HEK293 (cell line): ENCODE measurements at regions of chr17 and their contacts with region 1.

Region 1: DNA sequence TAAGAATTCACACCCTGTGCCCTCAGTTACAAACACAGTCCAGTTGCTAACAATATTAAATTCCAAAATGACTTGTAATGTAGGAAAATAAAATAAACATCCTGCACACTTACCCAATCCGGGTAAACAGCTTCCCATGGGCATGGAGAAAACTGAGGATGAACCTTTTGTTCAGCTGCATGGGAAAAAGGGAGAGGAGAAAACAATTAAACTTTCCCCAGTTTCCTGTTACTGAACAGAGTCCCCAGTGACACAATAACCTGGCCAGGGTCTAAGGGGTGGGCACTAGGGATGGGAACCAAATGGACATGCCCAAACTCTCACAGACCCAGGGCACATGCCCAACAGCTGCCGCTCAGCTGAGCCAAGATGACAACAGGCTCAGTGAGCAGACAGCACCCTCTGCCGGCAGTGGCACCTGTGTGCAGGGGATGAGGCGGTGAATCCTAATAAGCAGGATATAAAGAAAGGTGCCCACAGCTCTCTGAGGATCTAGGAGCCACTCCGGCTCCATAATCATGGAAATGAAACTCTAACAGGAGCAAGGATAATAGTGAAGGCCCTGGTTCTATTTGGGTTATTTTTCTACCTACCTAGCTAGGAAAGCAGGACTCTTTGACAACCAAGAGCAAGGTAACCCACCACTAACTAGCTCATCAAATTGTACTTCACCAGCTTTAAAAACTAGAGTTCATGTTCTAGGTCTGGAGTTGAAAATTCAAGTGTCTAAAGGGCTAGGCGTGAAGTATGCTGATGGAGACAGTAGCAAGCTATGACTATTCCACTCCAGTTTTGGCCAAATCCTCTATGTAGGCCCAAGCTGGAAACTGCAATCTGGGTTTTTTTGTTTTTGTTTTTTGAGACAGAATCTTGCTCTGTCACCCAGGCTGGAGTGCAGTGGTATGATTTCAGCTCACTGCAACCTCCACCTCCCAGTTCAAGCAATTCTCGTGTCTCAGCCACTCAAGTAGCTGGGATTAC is 58.8 kb downstream of the SMG6 start:
- H3K4me3 ChIP-seq: no peak overlapping the region
- H3K27ac ChIP-seq: no peak overlapping the region
- H3K4me1 ChIP-seq: no peaks in the 10 kb centered on the region
- CTCF ChIP-seq: peak; percentile 92

Region 2: DNA sequence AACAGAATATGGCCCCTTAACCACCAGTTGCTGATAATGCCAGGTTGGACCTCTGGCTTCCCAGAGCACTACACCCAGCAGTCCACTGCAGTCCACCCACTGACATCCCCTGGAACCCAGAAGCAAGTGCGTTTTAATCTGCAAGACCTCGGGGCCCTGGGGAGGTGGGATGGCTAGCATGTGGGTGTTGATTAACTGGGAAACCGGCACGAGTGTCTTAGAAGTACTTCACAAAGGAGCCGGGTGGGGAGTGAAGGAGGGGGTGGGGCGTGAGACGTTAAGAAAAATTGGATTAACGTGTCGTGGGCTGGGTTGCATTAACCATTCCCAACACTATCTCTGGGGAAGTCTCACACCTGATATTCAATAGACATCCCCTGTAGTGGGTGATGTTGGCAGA is 196.0 kb before region 1 on chr17:
- CTCF ChIA-PET with region 1: interaction called, 143 read pairs
- POLR2A ChIA-PET with region 1: interaction called, 4 read pairs
- H3K4me3 ChIP-seq: no peak overlapping the region
- H3K27ac ChIP-seq: no peak overlapping the region
- H3K4me1 ChIP-seq: peaks cover 5% of the 10 kb centered on the region
- CTCF ChIP-seq: no peak

Region 3: GRCh38 chr17:2064980-2065785 is 179.7 kb before region 1 on chr17:
- CTCF ChIA-PET with region 1: interaction called, 41 read pairs
- POLR2A ChIA-PET with region 1: interaction called, 5 read pairs
- H3K4me3 ChIP-seq: no peak overlapping the region
- H3K27ac ChIP-seq: 0 out of 2 replicates have a peak overlapping the region, but pooled peaks have one; percentile 31
- H3K4me1 ChIP-seq: no peaks in the 10 kb centered on the region; the same call in 1 of the 2 replicates
- CTCF ChIP-seq: peak; percentile 77

Region 4: DNA sequence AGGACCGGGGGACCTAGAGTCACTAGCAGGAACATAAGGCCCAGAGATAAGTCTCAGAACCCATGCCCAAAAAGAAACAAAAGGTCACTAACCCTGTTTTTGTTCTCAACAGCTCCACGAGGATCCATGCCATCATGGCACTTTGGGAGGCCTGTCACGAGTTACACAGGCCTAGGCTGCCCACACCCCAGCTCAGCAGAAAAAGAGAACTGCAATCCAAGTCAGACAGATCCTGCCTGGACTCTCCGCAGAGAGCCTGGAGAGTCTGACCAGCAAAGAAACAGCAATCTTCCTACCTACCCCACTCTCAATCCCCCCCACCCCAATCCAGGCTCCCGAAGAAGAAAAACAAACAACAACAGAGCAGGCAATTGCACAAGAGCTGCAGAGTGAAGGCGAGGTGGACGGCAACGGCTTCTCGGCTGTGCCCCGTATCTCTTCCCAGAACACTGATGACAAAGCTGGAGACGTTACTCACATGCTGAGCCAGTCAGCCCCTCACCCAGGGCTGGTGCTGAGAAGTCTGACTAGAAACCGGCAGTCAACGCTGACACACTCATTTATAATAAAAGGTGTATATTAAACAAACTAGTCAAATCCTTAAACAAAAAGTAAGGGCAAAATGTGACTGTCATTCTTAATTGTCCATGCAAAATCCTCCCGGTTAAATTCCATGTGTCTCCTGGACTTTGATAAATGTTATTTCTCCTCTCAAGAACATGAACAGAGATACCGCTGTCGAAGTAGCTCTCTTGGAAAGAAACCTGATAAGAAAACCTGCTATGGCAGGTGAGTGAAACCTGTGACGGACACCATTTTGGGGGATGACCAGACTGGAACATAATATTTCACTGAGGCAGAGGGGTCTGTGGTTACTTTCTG is 30.5 kb before region 1 on chr17:
- CTCF ChIA-PET with region 1: interaction called, 11 read pairs
- POLR2A ChIA-PET with region 1: no interaction called
- H3K4me3 ChIP-seq: no peak overlapping the region
- H3K27ac ChIP-seq: peak overlapping the region; percentile 44
- H3K4me1 ChIP-seq: peaks cover 15% of the 10 kb centered on the region
- CTCF ChIP-seq: no peak

Region 5: DNA sequence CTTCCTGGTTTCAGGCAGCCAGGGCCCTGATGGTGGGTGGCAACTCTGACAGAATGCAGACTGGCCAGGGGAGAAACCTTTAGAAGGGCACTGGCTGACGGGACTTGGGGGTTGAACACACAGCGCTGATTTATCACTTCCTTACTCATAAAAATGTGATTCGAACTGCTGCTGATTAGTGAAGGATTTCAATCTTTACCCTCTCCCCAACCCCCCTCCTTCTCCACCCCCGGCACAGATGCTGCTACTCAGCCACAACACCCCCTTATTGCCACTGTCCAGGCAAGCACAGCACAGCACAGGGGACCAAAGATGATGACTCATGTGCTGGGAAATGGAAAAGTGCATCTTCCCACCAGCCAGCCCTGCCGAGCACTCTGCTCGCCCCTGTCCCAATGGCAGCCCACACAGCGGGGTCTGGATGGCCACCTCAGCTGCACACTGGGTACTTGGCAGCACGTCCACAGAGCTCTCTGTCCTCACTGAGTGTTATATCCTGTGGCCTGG is 11.3 kb before region 1 on chr17:
- CTCF ChIA-PET with region 1: interaction called, 19 read pairs
- POLR2A ChIA-PET with region 1: interaction called, 3 read pairs
- H3K4me3 ChIP-seq: no peak overlapping the region
- H3K27ac ChIP-seq: no peak overlapping the region
- H3K4me1 ChIP-seq: no peaks in the 10 kb centered on the region
- CTCF ChIP-seq: no peak

Region 6: DNA sequence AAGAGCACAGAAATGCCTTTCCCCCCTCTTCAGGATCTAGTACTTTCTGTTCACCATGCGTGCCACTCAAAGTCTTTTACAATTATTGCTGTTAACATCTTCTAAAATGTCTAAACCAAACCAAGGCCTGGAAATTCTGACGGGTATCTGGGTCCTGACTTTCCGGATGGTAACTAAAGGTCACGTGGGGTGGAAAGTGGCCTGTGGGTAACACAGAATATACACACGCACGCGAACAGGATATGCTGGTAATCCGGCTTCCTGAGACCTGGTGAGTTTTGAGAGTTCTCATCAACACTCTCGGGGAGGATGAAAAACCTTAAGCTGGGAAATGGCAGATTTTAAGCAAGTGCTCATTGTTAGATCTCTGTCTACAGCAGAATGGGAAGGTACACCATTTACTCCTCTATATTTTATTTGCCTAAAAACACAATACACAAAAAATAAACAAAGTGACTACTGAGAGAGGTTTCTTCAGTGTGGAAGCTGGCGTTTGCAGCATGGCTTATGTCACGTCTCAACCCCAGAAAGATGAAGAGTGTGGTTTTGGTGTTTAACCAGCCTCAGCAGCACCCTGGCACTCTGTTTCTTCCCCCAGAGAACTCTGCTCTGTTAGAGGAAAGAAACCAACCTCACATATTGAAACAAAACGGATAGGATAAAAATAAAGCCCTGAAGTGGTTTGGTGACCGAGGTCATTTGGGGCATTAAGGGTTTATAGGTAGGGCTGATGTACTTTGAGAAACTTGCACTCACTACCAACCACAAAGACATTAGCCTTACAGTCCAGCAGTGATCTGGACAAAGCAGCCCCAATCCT is 21.4 kb after region 1 on chr17:
- CTCF ChIA-PET with region 1: interaction called, 21 read pairs
- POLR2A ChIA-PET with region 1: no interaction called
- H3K4me3 ChIP-seq: no peak overlapping the region
- H3K27ac ChIP-seq: no peak overlapping the region
- H3K4me1 ChIP-seq: peaks cover 14% of the 10 kb centered on the region
- CTCF ChIP-seq: no peak

Region 7: DNA sequence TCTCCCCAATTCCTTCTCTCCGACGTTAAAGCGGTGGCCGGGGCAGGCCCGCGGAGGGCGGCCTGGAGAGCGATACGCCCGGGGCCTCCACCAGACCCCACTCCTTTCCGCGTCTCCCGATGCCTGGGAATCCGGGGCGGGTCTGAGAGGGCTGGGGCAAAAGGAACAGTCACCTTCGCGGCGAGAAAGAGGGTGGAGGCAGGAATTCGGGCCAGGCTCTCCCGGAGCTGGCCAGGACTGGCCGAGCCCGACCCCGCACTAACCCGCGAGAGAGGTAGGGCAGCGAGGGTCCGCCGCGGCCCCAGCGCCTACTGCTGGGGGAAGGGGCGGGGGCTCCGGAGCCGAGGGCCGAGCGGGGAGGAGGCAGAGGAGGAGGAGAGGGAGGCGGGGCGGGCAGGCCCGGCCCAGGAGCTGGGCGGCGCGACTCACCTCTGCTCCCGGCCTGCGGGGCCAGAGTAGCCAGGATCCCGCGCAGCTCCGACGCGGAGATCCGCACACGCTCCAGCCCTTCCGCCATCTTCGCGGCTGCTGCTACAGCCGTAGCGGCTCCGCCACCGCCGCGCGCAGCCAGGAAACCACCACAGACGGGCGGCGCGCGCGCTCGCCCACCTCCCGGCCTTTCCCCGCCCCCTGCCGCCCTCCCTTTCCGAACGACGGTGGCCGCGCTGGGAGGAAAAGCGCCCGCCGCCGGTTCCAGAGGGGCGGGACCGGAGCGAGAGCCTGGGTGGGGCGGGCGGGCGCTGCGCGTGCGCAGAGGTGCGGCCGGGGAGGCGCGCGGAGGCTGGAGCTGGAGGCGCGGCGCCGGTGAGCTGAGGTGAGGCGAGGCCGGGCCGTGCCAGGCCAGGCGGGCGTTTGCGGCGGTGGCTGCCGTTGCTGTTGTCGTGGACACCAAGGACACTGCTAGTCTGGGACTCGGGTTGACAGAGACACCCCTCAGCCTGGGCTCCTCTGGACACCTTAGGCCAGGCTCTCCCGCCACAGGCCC is 58.7 kb after region 1 on chr17 and contains the starts of genes SMG6 and SRR:
- CTCF ChIA-PET with region 1: no interaction called
- POLR2A ChIA-PET with region 1: no interaction called
- H3K4me3 ChIP-seq: peak within 1 kb of the TSS; percentile 91
- H3K27ac ChIP-seq: peak within 1 kb of the TSS; percentile 97
- H3K4me1 ChIP-seq: no peaks in the 10 kb centered on the region
- CTCF ChIP-seq: peak; percentile 33; the same call in 1 of the 2 replicates